Heart left ventricle (tissue), 16 donors: ENCODE measurements at regions of chr5 and their contacts with region 1.

Region 1: DNA sequence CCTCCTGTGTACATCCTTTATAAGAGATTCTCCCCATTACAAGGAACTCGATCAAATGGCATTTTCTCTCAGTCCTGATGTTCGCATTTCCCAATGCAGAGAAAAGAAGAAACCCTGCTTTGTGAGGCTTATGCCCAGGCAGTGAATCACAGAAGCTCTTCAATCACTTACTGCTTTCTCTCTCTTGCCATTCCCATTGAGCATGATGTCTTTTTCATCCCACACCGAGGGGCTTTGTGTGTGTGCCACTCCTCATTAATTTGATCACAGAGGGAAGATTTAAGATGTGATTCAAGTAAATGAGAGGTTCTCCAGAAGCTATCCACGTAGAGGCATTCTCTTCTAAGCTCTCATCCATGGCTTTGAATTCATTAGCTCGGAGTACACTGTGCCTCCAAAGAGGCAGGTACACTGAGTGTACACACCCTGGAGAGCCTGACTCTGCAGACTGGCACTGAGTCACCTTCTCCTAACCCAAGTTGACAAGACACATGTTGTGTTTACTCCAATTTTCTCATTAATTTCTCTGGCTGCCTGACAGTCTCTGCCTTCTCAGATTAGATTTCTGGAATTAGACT is 45.4 kb downstream of the MFAP3 start:
- DNase-seq: no peak
- ATAC-seq: no peak
- H3K4me3 ChIP-seq: no peak overlapping the region
- H3K27ac ChIP-seq: no peak overlapping the region
- H3K4me1 ChIP-seq: peaks cover 0 to 25% (median 3%) of the 10 kb centered on the region in 12 donors
- H3K27me3 ChIP-seq: no peaks in the 10 kb centered on the region
- CTCF ChIP-seq: no peak
- POLR2A ChIP-seq: no peak

Region 2: DNA sequence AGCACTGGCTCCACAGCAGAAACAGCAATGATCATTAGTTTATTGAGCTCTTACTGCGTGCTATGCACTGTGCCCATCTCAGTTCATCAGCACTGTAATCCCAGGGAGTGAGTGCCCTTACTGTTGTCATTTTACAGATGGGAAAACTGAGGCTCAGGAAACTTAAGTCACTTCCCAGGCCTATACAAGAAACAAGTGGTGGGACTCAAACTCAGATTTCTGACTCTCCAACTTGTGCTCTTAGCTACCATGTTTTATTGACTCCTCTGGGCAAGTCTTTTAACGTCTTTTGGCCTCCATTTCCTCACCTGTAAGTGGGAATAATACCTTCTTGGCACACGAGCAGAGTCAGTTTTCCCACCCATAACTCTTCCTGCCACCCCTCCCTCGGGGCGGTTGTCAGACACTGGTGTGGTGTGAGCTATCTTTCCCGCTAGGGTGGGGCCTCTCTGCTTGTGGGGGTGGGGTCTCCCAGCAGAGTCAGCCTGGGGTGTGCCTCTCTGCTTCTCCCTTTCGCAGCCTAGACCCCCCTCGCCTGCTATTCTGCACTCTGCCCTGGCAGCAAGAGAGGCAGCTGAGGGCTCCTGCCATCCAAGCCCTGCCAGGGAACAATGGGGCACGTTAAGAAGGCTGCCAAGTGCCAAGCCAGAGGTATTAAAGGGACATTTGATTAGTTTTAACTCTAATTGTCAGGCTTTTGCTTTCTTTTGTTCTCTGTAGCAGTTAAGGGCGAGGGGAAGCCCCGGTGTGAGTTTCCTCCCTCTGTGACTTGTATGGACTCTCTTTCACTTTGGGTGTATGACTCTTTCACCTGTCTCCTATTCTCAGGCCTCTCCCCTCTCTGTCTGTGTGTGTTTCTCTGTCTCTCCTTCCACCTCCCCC is 118.5 kb after region 1 on chr5:
- intact Hi-C with region 1: no loop called
- DNase-seq: peak in 1 of 5 donors; percentile 45
- ATAC-seq: peak in 3 of 4 donors; percentile 51 to 54 (median 51)
- H3K4me3 ChIP-seq: no peak overlapping the region
- H3K27ac ChIP-seq: peak overlapping the region in 2 of 12 donors; percentile 23 to 30
- H3K4me1 ChIP-seq: peaks cover 0 to 33% (median 15%) of the 10 kb centered on the region in 12 donors
- H3K27me3 ChIP-seq: no peaks in the 10 kb centered on the region
- CTCF ChIP-seq: no peak
- POLR2A ChIP-seq: no peak

Region 3: DNA sequence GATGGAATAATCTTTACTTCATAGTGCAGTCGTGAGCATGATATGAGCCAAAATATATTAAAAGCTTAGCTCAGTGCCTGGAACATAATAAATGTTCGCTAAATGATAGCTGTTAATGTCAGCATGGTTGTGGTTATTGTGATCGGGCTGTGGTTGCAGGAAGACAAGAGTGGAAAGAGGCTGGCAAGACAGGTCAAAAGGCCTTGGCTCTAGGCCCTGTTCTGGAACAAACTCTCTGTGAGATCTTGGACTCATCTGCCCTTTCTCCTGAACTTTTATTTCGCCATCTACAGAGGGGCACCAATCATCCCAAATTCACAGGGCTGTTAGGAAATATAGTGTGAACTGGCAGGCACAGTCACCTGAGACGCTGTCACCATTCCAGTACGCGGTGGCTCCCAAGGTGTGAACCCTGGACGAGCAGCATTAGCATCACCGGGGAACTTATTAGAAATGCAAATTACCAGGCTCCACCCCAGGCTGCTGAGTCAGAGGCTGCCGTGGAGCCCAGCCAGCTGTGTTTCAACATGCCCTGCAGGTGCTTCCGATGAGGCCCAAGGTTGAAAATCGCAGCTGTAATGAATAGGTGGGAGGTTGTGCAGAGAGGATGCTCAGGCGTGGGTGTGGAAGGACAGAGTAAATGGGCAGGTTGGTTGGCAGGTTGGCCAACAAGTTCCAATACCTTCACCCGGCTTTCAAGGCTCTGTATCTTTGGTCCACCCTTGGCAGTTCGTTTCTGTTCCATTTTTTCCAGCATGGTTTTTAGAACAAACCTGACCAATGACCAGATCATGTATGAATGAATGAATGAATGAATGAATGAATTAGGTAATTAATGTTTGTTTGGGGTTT is 311.5 kb after region 1 on chr5:
- intact Hi-C with region 1: loop called in 1 of 10 experiments (anchors 5 kb)
- DNase-seq: peak in 1 of 5 donors; percentile 40
- ATAC-seq: peak in 2 of 4 donors; percentile 9 to 36
- H3K4me3 ChIP-seq: no peak overlapping the region
- H3K27ac ChIP-seq: no peak overlapping the region
- H3K4me1 ChIP-seq: peaks cover 0 to 7% (median 0%) of the 10 kb centered on the region in 12 donors
- H3K27me3 ChIP-seq: no peaks in the 10 kb centered on the region
- CTCF ChIP-seq: no peak
- POLR2A ChIP-seq: no peak